Testis (tissue), 5 donors: ENCODE measurements at regions of chr12 and their contacts with region 1.

Region 1: DNA sequence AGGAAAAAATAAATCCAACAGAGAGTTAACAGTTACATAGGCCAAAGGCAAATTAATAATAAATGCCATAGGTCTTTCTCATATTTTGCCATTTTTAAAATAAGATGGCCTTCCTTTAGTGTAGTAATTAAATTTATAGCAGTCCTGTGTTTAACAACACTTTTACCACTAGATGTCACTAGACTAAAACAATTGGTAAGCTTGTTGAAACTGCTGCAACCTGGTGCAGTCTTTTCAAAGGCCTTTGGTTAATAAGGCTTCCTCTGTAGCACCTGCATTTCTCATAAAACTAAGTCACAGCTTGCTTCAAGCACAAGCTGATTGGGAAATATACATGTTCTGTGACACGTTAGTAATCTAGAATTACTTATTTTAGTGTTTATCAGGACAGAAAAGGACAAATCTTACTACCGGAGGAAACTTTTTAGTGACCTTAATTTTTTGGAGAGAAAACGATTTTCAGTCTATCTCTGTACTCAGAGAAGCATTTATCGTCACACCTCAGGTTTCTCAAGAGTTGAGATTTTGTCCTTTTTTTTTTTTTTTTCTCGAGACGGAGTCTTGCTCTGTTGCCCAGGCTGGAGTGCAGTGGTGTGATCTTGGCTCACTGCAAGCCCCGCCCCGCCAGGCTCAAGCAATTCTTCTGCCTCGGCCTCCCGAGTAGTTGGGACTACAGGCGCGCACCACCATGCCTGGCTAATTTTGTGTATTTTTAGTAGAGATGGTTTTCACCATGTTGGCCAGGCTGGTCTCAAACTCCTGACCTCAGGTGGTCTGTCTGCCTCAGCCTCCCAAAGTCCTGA is 20.0 kb downstream of the BORCS5 start:
- DNase-seq: no peak
- H3K4me3 ChIP-seq: no peak overlapping the region
- H3K27ac ChIP-seq: no peak overlapping the region
- H3K4me1 ChIP-seq: no peaks in the 10 kb centered on the region
- H3K27me3 ChIP-seq: no peaks in the 10 kb centered on the region
- CTCF ChIP-seq: peak; percentile 65 to 76 (median 69)
- POLR2A ChIP-seq: no peak

Region 2: DNA sequence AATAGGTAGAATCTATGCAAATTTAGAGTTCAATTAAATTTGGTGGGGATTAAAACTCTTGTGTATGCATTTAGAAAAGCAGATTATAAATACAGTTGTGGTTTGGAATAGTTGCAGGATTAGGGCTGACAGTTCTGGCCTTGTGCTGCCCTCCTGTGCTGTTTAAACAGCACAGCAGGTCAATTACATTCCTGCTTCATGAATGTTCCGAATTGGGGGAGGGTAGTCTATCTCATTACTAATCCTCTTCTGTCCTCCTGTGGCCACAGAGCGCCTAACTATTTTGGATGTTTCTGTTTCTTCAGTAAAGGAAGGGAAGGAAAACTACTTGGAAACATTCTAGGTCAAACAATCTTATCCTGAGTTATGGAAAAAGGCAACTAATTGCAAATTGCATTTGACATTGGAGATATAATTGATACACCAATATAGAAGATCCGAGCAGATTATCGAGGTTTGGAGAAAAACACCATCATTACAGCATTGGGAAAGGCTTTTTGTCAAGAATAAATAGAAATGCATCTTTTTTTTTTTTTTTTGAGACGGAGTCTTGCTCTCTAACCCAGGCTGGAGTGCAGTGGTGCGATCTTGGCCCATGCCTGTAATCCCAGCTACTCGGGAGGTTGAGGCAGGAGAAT is 327.9 kb after region 1 on chr12:
- intact Hi-C with region 1: loop called (anchors 10 kb)
- DNase-seq: peak; percentile 84
- H3K4me3 ChIP-seq: no peak overlapping the region
- H3K27ac ChIP-seq: peak overlapping the region in 1 of 2 donors; percentile 43
- H3K4me1 ChIP-seq: peaks cover 6% of the 10 kb centered on the region
- H3K27me3 ChIP-seq: no peaks in the 10 kb centered on the region
- CTCF ChIP-seq: peak; percentile 75 to 94 (median 91)
- POLR2A ChIP-seq: no peak